ENCODE measurements at regions of chr4 and their contacts with region 1.

Region 1: DNA sequence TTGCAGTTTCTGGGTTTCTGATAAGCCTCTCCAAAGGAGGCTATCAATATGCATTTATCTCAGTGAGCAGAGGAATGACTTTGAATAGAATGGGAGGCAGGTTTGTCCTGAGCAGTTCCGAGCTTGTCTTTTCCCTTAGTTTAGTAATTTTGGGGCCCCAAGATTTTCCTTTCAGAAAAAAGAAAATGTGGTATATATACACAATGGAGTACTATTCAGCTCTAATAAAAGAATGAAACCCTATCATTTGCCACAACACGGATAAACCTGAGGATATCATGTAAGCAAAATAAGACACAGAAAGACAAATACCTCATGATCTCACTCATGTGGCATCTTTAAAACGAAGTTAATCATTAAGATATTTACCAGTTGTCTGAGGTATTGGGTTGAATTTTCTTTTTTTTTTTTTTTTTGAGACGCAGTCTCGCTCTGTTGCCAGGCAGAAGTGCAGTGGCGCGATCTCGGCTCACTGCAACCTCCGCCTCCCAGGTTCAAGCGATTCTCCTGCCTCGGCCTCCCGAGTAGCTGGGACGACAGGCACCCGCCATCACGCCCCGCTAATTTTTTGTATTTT is 540 bp downstream of the ZNF721 start:
- DNase-seq: no peak
- ATAC-seq: peak; percentile 23
- H3K4me3 Mint-ChIP-seq: peak overlapping the region; percentile 94
- H3K27ac Mint-ChIP-seq: peak overlapping the region; percentile 97
- H3K4me1 Mint-ChIP-seq: peaks cover 33% of the 10 kb centered on the region
- H3K27me3 Mint-ChIP-seq: no peaks in the 10 kb centered on the region

Region 2: GRCh38 chr4:473570-474457 is 24.6 kb before region 1 on chr4:
- CTCF ChIA-PET with region 1: interaction called, 3 read pairs
- POLR2A ChIA-PET with region 1: no interaction called
- intact Hi-C with region 1: loop called (anchors 1 kb)
- DNase-seq: peak; percentile 96
- ATAC-seq: peak; percentile 99
- H3K4me3 Mint-ChIP-seq: peak overlapping the region; percentile 98
- H3K27ac Mint-ChIP-seq: peak overlapping the region; percentile 100
- H3K4me1 Mint-ChIP-seq: peaks cover 38% of the 10 kb centered on the region
- H3K27me3 Mint-ChIP-seq: no peaks in the 10 kb centered on the region

Region 3: DNA sequence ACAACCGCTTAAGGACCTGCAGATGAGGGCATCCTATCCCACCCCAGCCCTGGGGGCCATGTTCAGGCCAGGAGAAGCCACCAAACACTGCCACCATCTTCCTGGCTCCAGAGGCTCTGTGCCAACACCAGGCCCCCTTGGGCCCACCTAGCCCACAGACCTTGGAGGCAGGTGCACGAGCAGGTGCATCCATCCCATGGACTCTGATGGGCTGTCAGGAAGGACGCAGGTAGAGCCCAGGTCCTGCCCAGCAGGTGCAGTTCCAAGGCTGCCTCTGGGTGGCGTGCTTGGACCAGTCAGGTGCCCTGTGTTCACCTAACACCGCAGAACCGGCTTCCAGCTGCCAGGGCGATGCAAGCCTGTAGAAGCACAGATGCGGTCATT is 104.1 kb after region 1 on chr4:
- CTCF ChIA-PET with region 1: no interaction called
- POLR2A ChIA-PET with region 1: no interaction called
- intact Hi-C with region 1: loop called in 1 of 2 experiments (anchors 1 kb)
- DNase-seq: peak; percentile 90
- ATAC-seq: peak; percentile 69
- H3K4me3 Mint-ChIP-seq: no peak overlapping the region
- H3K27ac Mint-ChIP-seq: no peak overlapping the region
- H3K4me1 Mint-ChIP-seq: peaks cover 19% of the 10 kb centered on the region
- H3K27me3 Mint-ChIP-seq: peaks cover 11% of the 10 kb centered on the region

Region 4: DNA sequence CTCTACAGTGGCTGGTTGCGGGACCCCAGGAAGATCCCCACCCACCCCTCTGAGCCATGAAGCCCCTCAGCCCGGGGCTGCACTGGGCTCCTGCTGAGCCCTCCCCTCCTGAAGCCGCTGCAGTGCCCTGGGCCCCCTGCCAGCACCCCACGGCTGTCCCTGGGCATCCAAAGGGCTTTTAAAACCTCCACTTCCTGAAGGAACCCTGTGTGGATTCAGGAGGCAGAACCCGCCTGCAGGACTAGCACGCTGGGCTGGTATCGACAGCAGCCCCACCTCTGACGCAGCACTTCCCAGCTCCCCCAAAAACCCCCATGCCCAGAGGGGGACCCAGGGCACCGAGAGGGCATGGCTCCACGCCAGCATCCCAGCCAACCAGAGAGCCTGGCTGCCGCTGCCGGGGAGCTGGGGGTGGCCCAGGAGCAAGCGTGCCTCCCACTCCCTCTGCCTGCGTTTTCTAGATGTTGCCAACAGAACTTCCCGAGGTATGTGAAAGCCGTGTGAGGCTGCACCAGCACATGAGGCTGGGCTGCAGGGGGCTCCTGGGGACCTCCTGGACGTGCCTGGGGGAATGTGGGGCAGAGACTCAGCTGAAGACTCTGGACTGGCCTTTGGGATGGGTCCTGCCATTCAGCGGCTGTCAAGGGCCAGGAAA is 1757.2 kb after region 1 on chr4:
- CTCF ChIA-PET with region 1: no interaction called
- POLR2A ChIA-PET with region 1: no interaction called
- intact Hi-C with region 1: no loop called
- DNase-seq: peak; percentile 5
- ATAC-seq: no peak
- H3K4me3 Mint-ChIP-seq: no peak overlapping the region
- H3K27ac Mint-ChIP-seq: no peak overlapping the region
- H3K4me1 Mint-ChIP-seq: peaks cover 2% of the 10 kb centered on the region
- H3K27me3 Mint-ChIP-seq: no peaks in the 10 kb centered on the region